AG04449 (cell line): ENCODE measurements at regions of chr16 and their contacts with region 1.

Region 1: GRCh38 chr16:4330277-4330874 is 14.5 kb downstream of the GLIS2 start:
- DNase-seq: no peak
- H3K4me3 ChIP-seq: no peak overlapping the region
- CTCF ChIP-seq: peak; percentile 96

Region 2: GRCh38 chr16:4232541-4233386 is 97.6 kb before region 1 on chr16:
- CTCF ChIA-PET with region 1: no interaction called
- POLR2A ChIA-PET with region 1: no interaction called
- DNase-seq: no peak
- H3K4me3 ChIP-seq: no peak overlapping the region
- CTCF ChIP-seq: no peak

Region 3: GRCh38 chr16:4261557-4262172 is 68.7 kb before region 1 on chr16:
- CTCF ChIA-PET with region 1: interaction called, 43 read pairs
- POLR2A ChIA-PET with region 1: no interaction called
- DNase-seq: no peak
- H3K4me3 ChIP-seq: no peak overlapping the region
- CTCF ChIP-seq: peak; percentile 67

Region 4: DNA sequence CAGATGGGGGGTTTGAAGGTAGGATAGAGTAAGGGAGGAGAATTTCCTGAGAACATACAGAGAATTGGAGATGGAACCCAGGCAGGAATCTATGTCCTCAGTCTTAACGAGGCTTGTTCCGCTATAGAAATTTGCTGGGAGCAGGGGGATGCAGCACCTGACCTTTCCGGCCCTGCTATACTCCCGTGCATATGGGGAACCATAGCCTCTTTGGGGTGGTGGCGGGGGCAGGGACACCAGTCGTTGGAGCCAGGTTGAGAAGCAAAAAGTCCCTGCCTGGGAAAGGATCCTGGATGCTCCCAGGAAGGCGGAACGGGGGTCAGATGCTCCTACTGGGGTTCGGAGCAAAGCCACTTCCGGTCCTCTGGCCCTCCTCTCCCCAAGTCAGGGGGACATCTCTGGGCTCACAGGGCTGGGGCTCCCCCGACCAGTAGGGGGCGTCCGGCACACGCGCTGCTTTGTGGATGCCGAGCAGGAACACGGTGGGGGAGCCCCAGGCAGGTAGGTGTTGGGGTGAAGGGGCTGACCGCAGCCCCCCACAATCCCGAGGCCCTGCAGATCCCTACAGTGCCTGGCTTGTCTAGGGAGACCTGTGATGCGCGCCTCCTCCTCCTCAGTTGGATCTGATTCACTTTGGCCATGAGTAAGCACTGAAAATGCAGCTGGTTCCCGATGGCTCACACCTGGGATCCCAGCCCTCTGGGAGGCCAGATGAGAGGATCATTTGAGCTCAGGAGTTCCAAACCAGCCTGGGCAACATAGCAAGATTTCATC is 42.0 kb before region 1 on chr16:
- CTCF ChIA-PET with region 1: interaction called, 104 read pairs
- POLR2A ChIA-PET with region 1: interaction called, 3 read pairs
- DNase-seq: no peak
- H3K4me3 ChIP-seq: no peak overlapping the region
- CTCF ChIP-seq: peak; percentile 95

Region 5: GRCh38 chr16:4307215-4308037 is 22.9 kb before region 1 on chr16:
- CTCF ChIA-PET with region 1: interaction called, 59 read pairs
- POLR2A ChIA-PET with region 1: no interaction called
- DNase-seq: peak; percentile 67
- H3K4me3 ChIP-seq: peak overlapping the region; percentile 70
- CTCF ChIP-seq: no peak

Region 6: DNA sequence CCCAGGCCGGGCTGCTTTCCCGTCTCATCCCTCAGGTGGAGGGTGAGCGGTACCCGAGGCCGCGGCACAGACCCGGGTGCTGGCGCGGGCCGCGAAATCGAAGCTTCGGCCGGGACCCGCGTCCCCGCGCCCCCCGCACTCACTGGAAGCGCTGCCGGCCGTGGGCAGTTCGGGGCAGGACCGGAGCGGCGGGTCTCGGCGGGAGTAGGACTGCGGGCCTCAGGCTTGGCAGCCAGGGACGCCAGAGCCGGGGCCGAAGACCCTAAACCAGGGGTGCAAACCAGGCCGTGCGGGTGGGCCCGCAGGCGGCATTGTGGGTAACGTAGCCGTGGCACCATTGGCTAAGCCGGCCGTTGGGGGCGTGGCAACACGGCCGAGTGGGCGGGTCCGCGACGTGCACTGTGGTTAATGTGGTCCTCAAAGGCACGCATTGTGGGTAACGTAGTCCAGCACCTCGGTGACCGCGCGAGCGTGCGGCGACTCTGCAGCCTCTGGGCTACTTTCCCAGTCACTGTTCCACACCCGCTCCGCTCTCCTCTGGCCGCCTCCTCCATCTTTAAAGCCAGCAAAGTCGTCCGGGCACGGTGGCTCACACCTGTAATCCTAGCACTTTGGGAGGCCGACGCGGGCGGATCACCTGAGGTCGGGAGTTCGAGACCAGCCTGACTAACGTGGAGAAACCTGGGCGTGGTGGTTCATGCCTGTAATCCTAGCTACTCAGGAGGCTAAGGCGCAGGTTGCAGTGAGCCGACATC is 436.7 kb after region 1 on chr16 and contains the start of gene ZNF500:
- CTCF ChIA-PET with region 1: no interaction called
- POLR2A ChIA-PET with region 1: no interaction called
- DNase-seq: peak; percentile 66
- H3K4me3 ChIP-seq: peak within 1 kb of the TSS; percentile 82
- CTCF ChIP-seq: no peak